Common myeloid progenitor, CD34-positive (primary cell): ENCODE measurements at regions of chr4 and their contacts with region 1.

Region 1: DNA sequence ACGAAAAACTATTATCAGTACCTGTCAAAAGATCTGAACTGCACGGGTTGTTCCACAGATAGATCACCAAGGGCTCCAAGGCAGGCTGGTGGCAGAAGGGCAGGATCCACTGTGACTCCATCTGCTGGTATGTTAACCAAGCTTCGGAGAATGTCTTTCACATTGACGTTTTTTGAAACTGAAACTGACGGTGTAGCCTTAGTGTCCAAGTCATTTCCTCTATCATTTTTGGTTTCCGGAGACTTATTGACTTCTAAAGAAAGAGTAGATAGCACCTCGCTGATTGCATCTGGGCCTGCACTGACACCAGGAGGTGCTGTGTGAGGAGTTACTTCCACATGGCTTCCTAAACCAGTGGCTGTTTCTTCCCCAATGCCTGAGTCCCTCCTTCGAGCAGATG is 186.9 kb downstream of the LRBA start:
- DNase-seq: peak in 2 of 3 donors; percentile 62 to 66
- H3K4me3 ChIP-seq: no peak overlapping the region
- H3K27ac ChIP-seq: no peak overlapping the region
- H3K4me1 ChIP-seq: peaks cover 0 to 23% (median 10%) of the 10 kb centered on the region in 4 experiments
- H3K27me3 ChIP-seq: no peaks in the 10 kb centered on the region

Region 2: DNA sequence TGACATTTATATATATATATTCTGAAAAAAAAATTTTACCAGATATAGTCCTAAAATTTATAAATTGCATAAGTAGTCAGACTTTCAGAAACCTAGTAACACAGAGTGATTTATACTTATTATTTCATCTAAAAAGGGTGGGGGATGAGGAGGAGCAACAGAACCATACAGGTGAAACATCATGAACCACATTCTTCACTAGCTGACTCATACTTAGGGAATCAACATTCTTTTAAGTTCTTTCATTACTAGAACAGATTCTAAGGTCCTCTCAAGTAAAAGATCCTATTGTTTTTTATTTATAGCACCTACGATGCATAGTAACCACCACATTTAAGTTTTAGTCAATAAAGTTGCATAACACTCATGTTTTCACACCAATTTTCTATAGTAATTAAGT is 20.9 kb after region 1 on chr4:
- CTCF ChIA-PET with region 1: interaction called, 10 read pairs
- POLR2A ChIA-PET with region 1: no interaction called
- DNase-seq: no peak
- H3K4me3 ChIP-seq: no peak overlapping the region
- H3K27ac ChIP-seq: no peak overlapping the region
- H3K4me1 ChIP-seq: no peaks in the 10 kb centered on the region
- H3K27me3 ChIP-seq: no peaks in the 10 kb centered on the region